Activated T-helper 2 cell treated with anti-CD3 and anti-CD28 coated beads, Interferon-gamma antibody, Interleukin-2, Interleukin-4, amounts not matched to agents 10 μg/mL and 5 μg/mL and 100 μg/mL, durations not matched to agents 14 hours and 24 hours and 36 hours (primary cell): ENCODE measurements at regions of chr9 and their contacts with region 1.

Region 1: DNA sequence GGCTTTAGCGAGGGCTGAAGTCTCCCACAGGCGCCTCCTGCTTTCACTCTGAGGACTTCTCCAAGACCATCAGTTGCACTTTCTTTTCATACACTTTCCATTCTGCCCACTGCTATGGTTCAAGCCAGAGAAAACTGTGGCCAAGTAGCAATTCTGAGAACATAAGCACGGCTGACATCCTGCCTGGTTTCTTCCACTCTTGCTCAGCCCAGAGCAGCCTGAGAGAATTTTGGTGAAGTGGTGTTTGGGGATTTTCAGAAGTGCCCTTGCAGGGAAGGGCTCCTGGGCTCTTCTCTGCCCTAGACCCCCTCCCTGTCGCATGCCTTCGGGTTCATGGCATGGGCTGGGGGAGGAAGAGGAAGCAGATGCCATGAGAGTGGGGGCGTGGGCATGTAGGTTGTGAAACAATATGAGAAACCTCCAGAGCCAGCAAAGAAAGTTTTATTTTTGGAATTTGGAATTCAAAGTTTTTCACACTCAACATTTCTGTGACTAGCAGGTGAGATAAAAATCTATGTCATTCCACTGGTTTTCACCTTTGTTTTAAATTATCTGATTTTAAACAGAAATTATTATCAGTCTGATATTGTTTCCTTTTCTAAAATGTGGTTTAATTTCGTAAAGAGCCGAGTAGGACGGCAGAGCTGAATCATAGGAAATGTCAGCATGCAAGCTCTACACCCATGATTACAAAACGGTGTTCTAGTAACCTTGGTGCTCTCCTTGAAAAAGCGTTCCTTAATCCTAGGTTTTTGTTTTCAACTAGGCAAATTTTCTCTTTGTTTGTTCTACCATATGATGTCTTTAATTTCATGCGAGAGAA is 27.8 kb upstream of the TNFSF8 start:
- DNase-seq: peak; percentile 33
- H3K4me3 Mint-ChIP-seq: peak overlapping the region; percentile 70
- H3K27ac Mint-ChIP-seq: peak overlapping the region; percentile 94
- H3K4me1 Mint-ChIP-seq: peaks cover 54% of the 10 kb centered on the region
- H3K27me3 Mint-ChIP-seq: no peaks in the 10 kb centered on the region

Region 2: DNA sequence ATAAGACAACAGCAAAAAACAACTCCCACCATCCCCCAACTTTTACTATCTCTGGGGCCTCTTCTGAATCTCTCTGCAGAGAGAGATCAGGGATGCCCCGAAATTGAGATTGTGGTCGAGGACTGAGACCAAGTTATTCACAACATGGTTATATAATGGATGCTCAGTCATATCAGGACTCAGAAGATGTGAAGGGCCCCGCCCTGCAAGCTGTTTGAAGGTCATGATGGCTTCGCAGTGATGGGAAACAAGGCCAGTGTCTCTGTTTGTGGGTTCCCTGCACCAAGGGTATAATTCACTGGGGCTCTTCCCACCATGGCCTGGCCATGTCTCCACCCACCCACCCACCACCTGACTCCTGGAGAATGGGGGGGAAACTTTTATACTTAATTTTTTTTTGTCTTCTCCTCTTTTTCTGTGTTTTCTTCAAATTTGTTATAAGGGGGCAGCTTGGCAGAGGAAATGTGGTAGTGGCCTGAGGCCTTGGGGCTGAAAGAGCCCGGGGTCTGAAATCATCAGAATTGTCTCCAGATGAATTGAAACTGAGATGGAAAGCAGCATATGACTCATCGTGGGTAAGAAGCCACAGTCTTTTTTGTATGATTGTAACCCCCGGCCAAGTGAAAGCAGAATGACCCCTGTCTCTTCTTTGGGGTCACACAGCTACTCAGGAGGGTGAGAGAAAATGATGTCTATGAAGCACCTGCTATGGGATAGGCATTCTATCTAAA is 261.3 kb before region 1 on chr9:
- intact Hi-C with region 1: loop called (anchors 1 kb)
- DNase-seq: peak; percentile 75
- H3K4me3 Mint-ChIP-seq: peak overlapping the region; percentile 52
- H3K27ac Mint-ChIP-seq: peak overlapping the region; percentile 96
- H3K4me1 Mint-ChIP-seq: peaks cover 87% of the 10 kb centered on the region
- H3K27me3 Mint-ChIP-seq: no peaks in the 10 kb centered on the region

Region 3: GRCh38 chr9:114919611-114920010 is 38.6 kb before region 1 on chr9:
- intact Hi-C with region 1: loop called (anchors 5 kb)
- DNase-seq: no peak
- H3K4me3 Mint-ChIP-seq: no peak overlapping the region
- H3K27ac Mint-ChIP-seq: peak overlapping the region; percentile 68
- H3K4me1 Mint-ChIP-seq: peaks cover 69% of the 10 kb centered on the region
- H3K27me3 Mint-ChIP-seq: no peaks in the 10 kb centered on the region

Region 4: DNA sequence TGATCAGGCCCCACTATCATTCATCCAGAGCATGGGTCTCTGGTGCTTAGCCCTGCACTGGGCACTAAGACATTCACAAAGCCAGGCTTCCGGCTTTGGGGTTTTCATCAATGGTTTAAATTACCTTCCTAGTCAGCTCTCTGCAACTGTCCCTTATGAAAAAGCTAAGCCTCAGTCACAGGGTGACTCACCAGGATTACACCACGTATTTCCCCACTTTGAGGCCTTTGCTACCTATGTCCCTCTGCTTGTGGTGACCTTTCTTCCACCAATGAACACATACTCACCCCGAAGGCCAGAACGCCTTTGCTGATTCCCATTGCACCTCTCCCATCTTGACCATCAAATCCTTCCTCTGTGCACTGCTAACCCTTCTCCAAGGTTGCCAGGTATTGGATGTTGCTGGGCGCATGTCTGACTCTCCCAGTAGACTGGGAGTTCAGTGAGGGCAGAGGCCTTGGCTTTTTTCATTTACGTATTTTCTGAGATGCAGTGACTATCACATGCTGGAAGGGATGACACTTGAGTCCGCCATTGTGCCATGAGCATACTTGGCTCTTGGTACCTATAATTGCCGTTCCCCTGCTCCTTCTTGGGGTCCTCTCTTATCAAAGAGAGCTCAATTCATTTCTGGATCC is 30.8 kb after region 1 on chr9:
- intact Hi-C with region 1: loop called (anchors 2 kb)
- DNase-seq: no peak
- H3K4me3 Mint-ChIP-seq: no peak overlapping the region
- H3K27ac Mint-ChIP-seq: peak overlapping the region; percentile 97
- H3K4me1 Mint-ChIP-seq: peaks cover 59% of the 10 kb centered on the region
- H3K27me3 Mint-ChIP-seq: no peaks in the 10 kb centered on the region

Region 5: DNA sequence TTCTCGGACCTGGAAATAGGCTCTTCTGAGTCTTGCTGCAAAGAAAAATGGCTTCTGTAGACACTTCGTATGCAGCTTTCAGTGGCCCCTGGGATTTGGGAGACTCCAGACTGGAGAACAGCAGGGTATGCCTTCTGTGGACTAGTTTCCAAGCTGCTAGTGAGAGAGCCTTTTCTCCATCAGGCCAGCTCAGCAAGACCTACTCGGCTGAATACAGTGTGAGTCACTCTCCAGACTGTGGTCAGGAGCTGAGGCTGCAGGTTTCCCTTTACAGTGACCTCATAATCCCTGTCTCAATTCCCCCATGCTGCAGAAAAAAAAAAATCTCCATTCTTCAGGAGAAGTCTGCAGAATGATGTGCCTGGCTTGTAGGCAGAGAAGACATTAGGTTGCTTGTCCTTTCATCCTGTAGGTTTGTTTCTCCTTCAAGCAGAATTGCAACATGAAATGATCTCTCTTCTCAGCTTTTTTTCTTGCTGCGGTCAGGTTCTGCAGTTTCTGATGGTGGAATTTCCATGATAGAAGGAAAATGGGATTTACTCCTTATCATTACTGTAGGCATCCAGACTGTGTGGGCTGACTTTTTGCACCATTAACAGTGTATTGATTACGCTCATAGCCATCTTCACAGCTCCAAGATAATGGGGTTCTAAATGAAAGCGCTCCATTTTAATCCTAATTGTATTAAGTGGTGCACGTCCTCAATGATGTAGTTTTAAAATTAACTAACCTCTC is 50.5 kb after region 1 on chr9:
- intact Hi-C with region 1: loop called (anchors 1 kb)
- DNase-seq: no peak
- H3K4me3 Mint-ChIP-seq: no peak overlapping the region
- H3K27ac Mint-ChIP-seq: no peak overlapping the region
- H3K4me1 Mint-ChIP-seq: peaks cover 65% of the 10 kb centered on the region
- H3K27me3 Mint-ChIP-seq: peaks cover 2% of the 10 kb centered on the region